K562 (cell line): ENCODE measurements at regions of chr19 and their contacts with region 1.

Region 1: GRCh38 chr19:45886427-45887199 is 672 bp upstream of the IRF2BP1 start:
- DNase-seq: peak; percentile 85 to 96 (median 90)
- ATAC-seq: peak; percentile 74
- H3K4me3 ChIP-seq: peak overlapping the region; percentile 58
- H3K27ac ChIP-seq: peak overlapping the region; percentile 94
- H3K4me1 ChIP-seq: peaks cover 37 to 63% of the 10 kb centered on the region in 2 experiments; a peak in 4 of 5 replicates
- H3K27me3 ChIP-seq: no peaks in the 10 kb centered on the region
- CTCF ChIP-seq: no peak
- EP300 ChIP-seq: no peak
- POLR2A ChIP-seq: peak; percentile 72
- RAD21 ChIP-seq: no peak

Region 2: DNA sequence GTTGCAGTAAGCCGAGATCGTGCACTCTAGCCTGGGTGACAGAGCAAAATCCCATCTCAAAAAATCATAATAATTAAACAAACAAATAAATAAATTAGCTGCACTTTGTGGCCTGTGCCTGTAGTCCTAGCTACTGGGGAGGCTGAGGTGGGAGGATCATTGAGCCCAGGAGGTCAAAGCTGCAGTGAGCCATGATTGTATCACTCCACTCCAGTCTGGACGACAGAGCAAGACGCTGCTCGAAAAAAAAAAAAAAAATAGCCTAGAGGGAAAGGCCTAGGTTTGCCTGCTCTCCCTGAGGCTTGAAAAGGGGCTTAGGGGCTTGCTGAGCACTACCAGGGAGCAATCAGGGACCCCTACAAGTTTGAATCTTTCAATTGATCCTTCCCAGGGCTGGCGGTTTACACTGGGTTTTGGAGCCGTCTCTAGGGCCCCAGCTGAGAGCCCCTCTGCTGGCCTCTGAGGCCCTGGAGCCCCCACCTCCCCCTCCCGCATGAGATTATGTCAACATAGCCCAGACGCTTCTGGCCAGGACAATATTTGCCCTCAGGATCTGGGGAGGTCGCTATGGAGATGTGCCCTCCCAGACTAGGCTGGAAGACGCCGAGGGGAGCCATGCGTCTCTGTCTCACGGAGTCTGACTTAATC is 229.0 kb before region 1 on chr19:
- CTCF ChIA-PET with region 1: no interaction called
- POLR2A ChIA-PET with region 1: no interaction called
- in situ Hi-C with region 1: no loop called
- intact Hi-C with region 1: no loop called
- DNase-seq: peak in 2 of 4 experiments; percentile 19 to 22
- ATAC-seq: peak; percentile 33
- H3K4me3 ChIP-seq: no peak overlapping the region
- H3K27ac ChIP-seq: no peak overlapping the region
- H3K4me1 ChIP-seq: peaks cover 4 to 7% of the 10 kb centered on the region in 2 experiments; a peak in 3 of 5 replicates
- H3K27me3 ChIP-seq: no peaks in the 10 kb centered on the region
- CTCF ChIP-seq: no peak
- EP300 ChIP-seq: no peak
- POLR2A ChIP-seq: no peak
- RAD21 ChIP-seq: no peak

Region 3: DNA sequence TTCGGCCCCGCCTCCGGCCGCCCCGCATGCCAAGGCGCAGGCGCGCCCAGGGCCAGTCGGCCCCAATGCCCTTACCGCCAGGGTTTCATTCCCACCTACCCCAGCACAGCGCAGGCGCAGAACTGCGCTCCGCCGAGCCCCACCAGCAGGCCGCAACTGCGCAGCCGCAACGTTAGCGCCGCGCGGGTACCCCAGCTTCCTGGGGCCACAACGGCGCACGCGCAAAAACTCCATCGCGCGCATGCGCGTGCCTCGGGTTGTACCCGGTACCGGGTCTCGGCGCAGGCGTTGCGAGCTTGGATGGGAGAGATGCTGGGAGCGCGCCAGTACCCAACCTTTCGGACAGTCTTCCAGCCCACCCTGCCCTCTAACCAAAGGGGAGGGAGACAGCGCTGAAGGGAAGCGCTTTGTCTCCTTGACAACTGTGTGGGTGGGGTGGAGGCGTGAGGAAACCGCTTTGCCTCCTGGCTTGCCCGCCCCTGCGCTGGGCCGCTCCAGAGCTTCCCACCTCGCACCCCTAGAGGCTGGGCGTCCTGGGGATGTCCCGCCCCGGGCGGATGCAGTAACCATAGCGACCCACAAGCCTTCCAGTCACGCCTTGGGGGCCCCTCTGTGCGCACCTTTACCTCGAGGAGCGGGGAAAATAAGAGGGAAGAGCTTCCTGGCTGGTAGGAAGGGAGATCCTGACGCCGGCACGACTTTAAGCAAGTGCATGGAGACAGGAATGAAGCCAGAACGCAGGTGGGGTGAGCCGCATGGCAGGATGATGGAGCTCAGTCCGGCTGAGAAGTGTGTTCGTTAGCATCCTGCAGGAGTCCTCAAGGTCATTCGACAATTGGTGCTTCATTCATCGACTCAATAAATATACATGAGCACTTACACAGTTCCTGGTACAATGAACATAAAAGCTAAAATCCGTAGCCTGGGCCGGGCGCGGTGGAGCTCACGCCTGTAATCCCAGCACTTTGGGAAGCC is 16.3 kb after region 1 on chr19:
- CTCF ChIA-PET with region 1: no interaction called
- POLR2A ChIA-PET with region 1: interaction called, 12 read pairs
- in situ Hi-C with region 1: no loop called
- intact Hi-C with region 1: no loop called
- DNase-seq: peak; percentile 99 to 100 (median 100)
- ATAC-seq: peak; percentile 92
- H3K4me3 ChIP-seq: peak overlapping the region; percentile 52
- H3K27ac ChIP-seq: no peak overlapping the region; the same call in 2 of the 3 replicates
- H3K4me1 ChIP-seq: peaks cover 6 to 25% of the 10 kb centered on the region in 2 experiments; a peak in 4 of 5 replicates
- H3K27me3 ChIP-seq: no peaks in the 10 kb centered on the region
- CTCF ChIP-seq: no peak
- EP300 ChIP-seq: no peak
- POLR2A ChIP-seq: peak; percentile 73
- RAD21 ChIP-seq: no peak